WTC11 (cell line): ENCODE measurements at regions of chr10 and their contacts with region 1.

Region 1: DNA sequence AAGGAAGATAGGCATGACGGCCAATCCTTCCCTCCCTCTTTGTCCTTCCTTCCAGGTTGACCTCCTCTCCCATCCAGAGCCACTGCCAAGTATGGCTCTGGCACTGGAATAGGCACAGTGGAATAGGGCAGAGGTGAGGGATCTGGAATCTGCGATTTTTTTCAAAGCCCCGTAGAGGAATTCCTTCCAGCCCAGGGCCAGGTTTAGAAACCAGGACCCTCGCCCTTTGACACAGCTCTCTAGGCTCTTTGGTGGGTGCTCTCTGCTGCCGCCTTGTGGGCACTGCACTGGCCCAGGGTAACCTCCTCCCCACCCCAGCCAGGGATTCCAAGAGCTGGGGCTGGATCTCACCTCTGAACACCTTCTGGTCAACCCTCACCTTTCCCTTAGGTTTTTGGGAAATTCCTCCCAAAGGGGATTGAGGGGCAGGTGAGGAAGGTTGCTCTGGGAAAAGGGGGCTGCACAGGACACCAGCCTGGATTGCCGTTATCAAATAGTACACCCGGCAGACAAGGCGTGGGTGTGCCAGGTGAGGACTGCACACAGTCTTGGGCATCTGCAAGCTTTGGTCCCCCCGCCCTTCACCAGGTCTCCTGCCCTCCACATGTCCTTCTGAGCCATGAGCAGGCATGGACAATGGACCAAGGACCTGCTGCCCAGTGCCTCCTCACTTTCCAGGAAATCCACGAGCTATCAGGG is 22.8 kb downstream of the C10orf105 start:
- DNase-seq: peak; percentile 91
- ATAC-seq: peak; percentile 97
- H3K4me3 Mint-ChIP-seq: no peak overlapping the region
- H3K27ac Mint-ChIP-seq: no peak overlapping the region
- H3K4me1 Mint-ChIP-seq: no peaks in the 10 kb centered on the region
- H3K27me3 Mint-ChIP-seq: no peaks in the 10 kb centered on the region; the same call in 1 of the 2 replicates
- CTCF ChIP-seq: peak; percentile 83

Region 2: GRCh38 chr10:71314028-71314693 is 382.6 kb before region 1 on chr10:
- CTCF ChIA-PET with region 1: interaction called, 34 read pairs
- POLR2A ChIA-PET with region 1: no interaction called
- DNase-seq: peak; percentile 52
- ATAC-seq: peak; percentile 52
- H3K4me3 Mint-ChIP-seq: peak overlapping the region; percentile 53
- H3K27ac Mint-ChIP-seq: no peak overlapping the region
- H3K4me1 Mint-ChIP-seq: peaks cover 13% of the 10 kb centered on the region
- H3K27me3 Mint-ChIP-seq: peaks cover 13% of the 10 kb centered on the region
- CTCF ChIP-seq: peak; percentile 59

Region 3: DNA sequence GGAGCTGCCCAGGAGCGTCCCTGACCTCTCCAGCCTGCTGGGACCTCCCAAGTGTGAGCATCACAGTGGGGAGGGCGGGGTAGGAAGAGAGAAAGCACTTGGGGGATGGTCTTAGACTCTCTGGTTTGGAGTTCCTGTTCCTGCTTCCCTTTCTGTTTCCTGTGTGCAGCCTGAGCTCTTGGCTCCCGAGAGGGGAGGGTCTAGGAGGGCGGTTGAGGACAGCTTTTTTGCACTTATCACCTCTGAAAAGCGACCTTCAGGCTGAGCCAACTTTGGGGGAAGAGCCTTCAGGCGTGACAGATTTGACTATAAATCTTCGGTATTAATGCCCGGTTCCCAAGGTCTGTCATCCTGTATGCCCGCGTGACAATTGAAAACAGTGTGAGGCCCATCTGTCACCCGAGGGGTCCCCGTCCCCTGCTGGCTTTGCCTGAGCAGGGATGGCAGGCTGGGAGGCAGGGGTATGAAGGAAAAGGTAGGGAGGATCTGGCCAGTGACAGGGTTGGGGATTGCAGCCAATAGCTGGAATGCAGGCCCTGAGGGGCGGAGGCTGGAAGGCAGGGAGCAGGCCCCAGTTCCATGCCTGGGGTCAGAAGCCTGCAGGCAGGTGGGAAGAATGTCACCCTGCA is 221.4 kb before region 1 on chr10:
- CTCF ChIA-PET with region 1: interaction called, 11 read pairs
- POLR2A ChIA-PET with region 1: no interaction called
- DNase-seq: peak; percentile 50
- ATAC-seq: peak; percentile 92
- H3K4me3 Mint-ChIP-seq: no peak overlapping the region
- H3K27ac Mint-ChIP-seq: 0 out of 2 replicates have a peak overlapping the region, but pooled peaks have one; percentile 20
- H3K4me1 Mint-ChIP-seq: peaks cover 10% of the 10 kb centered on the region
- H3K27me3 Mint-ChIP-seq: no peaks in the 10 kb centered on the region
- CTCF ChIP-seq: no peak

Region 4: DNA sequence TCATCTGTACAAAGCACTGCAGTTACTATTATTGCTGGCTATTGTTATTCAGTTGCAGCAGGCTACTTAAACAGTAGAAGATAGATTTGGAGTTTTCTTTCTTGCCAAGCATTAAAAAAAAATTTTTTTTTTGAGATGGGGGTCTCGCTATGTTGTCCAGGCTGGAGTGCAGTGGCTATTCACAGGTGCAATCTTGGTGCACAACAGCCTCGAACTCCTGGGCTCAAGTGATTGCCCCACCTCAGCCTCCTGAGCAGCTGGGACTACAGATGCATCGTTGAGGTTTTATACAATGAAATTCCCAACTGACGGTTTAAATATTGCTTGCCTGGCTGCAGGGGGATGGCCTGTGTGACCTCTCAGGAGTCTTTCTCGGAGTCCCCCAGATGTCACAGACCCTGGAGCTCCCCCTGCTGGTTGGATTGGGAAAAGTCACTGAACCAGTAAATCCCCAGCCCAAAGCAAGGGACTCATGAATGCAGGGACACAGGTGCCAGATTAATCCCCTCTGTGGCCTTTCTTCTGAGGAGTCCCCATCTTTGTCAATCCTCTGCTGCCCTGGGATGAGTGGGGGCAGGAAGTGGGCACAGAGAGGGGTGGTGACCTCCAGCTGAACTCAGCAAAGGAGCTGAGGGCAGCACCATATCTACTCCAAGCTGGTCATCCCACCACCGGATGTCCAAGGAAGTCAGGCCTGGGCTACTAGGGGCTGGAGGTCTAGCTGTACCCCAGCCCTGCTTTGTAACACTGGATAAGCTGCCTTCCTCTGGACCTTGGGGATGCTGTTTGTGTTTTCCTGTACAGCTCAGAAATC is 126.8 kb before region 1 on chr10:
- CTCF ChIA-PET with region 1: interaction called, 24 read pairs
- POLR2A ChIA-PET with region 1: no interaction called
- DNase-seq: peak; percentile 92
- ATAC-seq: peak; percentile 62
- H3K4me3 Mint-ChIP-seq: no peak overlapping the region
- H3K27ac Mint-ChIP-seq: no peak overlapping the region
- H3K4me1 Mint-ChIP-seq: peaks cover 7% of the 10 kb centered on the region
- H3K27me3 Mint-ChIP-seq: no peaks in the 10 kb centered on the region; the same call in 1 of the 2 replicates
- CTCF ChIP-seq: peak; percentile 91

Region 5: GRCh38 chr10:71647526-71648253 is 49.1 kb before region 1 on chr10:
- CTCF ChIA-PET with region 1: interaction called, 49 read pairs
- POLR2A ChIA-PET with region 1: no interaction called
- DNase-seq: peak; percentile 69
- ATAC-seq: peak; percentile 86
- H3K4me3 Mint-ChIP-seq: no peak overlapping the region
- H3K27ac Mint-ChIP-seq: no peak overlapping the region
- H3K4me1 Mint-ChIP-seq: peaks cover 38% of the 10 kb centered on the region
- H3K27me3 Mint-ChIP-seq: peaks cover 3% of the 10 kb centered on the region; the same call in 1 of the 2 replicates
- CTCF ChIP-seq: peak; percentile 48; the same call in 1 of the 2 replicates

Region 6: GRCh38 chr10:71684356-71685173 is 12.2 kb before region 1 on chr10:
- CTCF ChIA-PET with region 1: interaction called, 58 read pairs
- POLR2A ChIA-PET with region 1: no interaction called
- DNase-seq: no peak
- ATAC-seq: peak; percentile 40
- H3K4me3 Mint-ChIP-seq: no peak overlapping the region
- H3K27ac Mint-ChIP-seq: no peak overlapping the region
- H3K4me1 Mint-ChIP-seq: peaks cover 29% of the 10 kb centered on the region
- H3K27me3 Mint-ChIP-seq: no peaks in the 10 kb centered on the region
- CTCF ChIP-seq: no peak

Region 7: DNA sequence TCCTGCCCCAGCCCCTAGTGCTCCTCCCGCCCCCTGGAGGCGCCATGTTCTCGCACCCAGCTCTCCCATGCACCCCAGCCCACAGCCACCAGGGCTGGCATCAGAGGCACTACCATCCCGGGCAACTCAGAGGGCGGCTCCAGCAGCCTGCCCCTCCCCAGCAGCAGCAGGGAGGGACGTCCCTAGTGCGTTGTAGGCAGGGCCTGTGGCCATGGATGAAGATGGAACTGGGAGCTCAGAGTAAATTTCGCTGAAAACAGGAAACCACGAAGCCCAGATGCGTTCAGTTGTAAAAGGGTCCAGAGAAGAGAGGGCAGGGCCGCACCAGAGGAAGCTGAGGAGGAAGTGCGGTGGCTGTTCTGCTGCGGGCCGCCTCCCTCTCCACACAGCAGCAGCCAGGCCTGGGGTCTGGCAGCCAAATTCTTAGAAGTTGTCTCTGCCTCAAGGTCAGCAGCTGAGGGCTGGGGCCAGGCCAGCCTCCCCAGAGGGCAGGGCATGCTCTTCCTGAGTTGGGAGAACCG is 52.0 kb after region 1 on chr10:
- CTCF ChIA-PET with region 1: interaction called, 12 read pairs
- POLR2A ChIA-PET with region 1: no interaction called
- DNase-seq: no peak
- ATAC-seq: peak; percentile 43
- H3K4me3 Mint-ChIP-seq: no peak overlapping the region
- H3K27ac Mint-ChIP-seq: no peak overlapping the region
- H3K4me1 Mint-ChIP-seq: peaks cover 21% of the 10 kb centered on the region
- H3K27me3 Mint-ChIP-seq: no peaks in the 10 kb centered on the region
- CTCF ChIP-seq: no peak